B cell (primary cell): ENCODE measurements at regions of chr3 and their contacts with region 1.

Region 1: GRCh38 chr3:196251918-196252317 is 35.6 kb downstream of the SLC51A start:
- DNase-seq: peak; percentile 46
- ATAC-seq: peak; percentile 57
- H3K4me3 ChIP-seq: no peak overlapping the region
- H3K4me3 Mint-ChIP-seq: no peak overlapping the region
- H3K27ac ChIP-seq: no peak overlapping the region
- H3K27ac Mint-ChIP-seq: no peak overlapping the region
- H3K4me1 ChIP-seq: no peaks in the 10 kb centered on the region
- H3K4me1 Mint-ChIP-seq: peaks cover 8% of the 10 kb centered on the region
- H3K27me3 ChIP-seq: no peaks in the 10 kb centered on the region
- H3K27me3 Mint-ChIP-seq: no peaks in the 10 kb centered on the region
- CTCF ChIP-seq: no peak

Region 2: GRCh38 chr3:196287440-196288148 is 35.7 kb after region 1 on chr3 and contains the start of gene PCYT1A:
- CTCF ChIA-PET with region 1: interaction called, 3 read pairs
- POLR2A ChIA-PET with region 1: no interaction called
- intact Hi-C with region 1: loop called (anchors 2 kb)
- DNase-seq: peak; percentile 87
- ATAC-seq: peak; percentile 78
- H3K4me3 ChIP-seq: peak within 1 kb of the TSS; percentile 68 to 98 (median 96)
- H3K4me3 Mint-ChIP-seq: peak within 1 kb of the TSS; percentile 100
- H3K27ac ChIP-seq: peak within 1 kb of the TSS; percentile 70 to 92
- H3K27ac Mint-ChIP-seq: peak within 1 kb of the TSS; percentile 98
- H3K4me1 ChIP-seq: peaks cover 17 to 36% of the 10 kb centered on the region in 2 donors
- H3K4me1 Mint-ChIP-seq: peaks cover 58% of the 10 kb centered on the region
- H3K27me3 ChIP-seq: no peaks in the 10 kb centered on the region
- H3K27me3 Mint-ChIP-seq: no peaks in the 10 kb centered on the region
- CTCF ChIP-seq: no peak
- total RNA-seq, gene PCYT1A: 59.9 and 61.2 TPM in 2 replicates

Region 3: GRCh38 chr3:196317687-196318467 is 66.0 kb after region 1 on chr3 and contains the start of gene DYNLT2B:
- CTCF ChIA-PET with region 1: interaction called, 3 read pairs
- POLR2A ChIA-PET with region 1: interaction called, 3 read pairs
- intact Hi-C with region 1: loop called (anchors 5 kb)
- DNase-seq: peak; percentile 93
- ATAC-seq: peak; percentile 91
- H3K4me3 ChIP-seq: peak within 1 kb of the TSS; percentile 44 to 85 (median 76)
- H3K4me3 Mint-ChIP-seq: peak within 1 kb of the TSS; percentile 96
- H3K27ac ChIP-seq: peak within 1 kb of the TSS; percentile 85 to 89
- H3K27ac Mint-ChIP-seq: peak within 1 kb of the TSS; percentile 97
- H3K4me1 ChIP-seq: peaks cover 0 to 10% of the 10 kb centered on the region in 2 donors
- H3K4me1 Mint-ChIP-seq: peaks cover 10% of the 10 kb centered on the region
- H3K27me3 ChIP-seq: no peaks in the 10 kb centered on the region
- H3K27me3 Mint-ChIP-seq: no peaks in the 10 kb centered on the region
- CTCF ChIP-seq: no peak
- total RNA-seq, gene DYNLT2B: 5.6 and 6.5 TPM in 2 replicates

Region 4: DNA sequence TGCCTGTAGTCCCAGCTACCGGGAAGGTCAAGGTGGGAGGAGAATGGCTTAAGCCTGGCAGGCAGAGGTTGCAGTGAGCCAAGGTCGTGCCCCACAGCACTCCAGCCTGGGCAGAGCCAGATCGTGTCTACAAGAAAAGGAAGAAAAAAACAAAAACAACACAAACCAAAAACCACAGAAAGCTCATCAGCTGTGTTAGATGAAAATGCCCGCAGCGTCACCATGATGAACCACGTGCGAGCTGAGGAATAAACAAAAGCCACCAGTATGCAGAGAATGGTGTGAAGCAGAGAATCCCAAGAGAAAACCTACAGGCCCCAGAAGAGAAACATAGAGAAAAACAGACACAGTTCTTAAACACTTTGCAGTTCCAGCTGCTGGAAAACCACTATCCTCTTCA is 106.0 kb after region 1 on chr3:
- CTCF ChIA-PET with region 1: interaction called, 3 read pairs
- POLR2A ChIA-PET with region 1: no interaction called
- intact Hi-C with region 1: loop called (anchors 10 kb)
- DNase-seq: no peak
- ATAC-seq: no peak
- H3K4me3 ChIP-seq: no peak overlapping the region
- H3K4me3 Mint-ChIP-seq: no peak overlapping the region
- H3K27ac ChIP-seq: no peak overlapping the region
- H3K27ac Mint-ChIP-seq: no peak overlapping the region
- H3K4me1 ChIP-seq: no peaks in the 10 kb centered on the region
- H3K4me1 Mint-ChIP-seq: no peaks in the 10 kb centered on the region
- H3K27me3 ChIP-seq: no peaks in the 10 kb centered on the region
- H3K27me3 Mint-ChIP-seq: no peaks in the 10 kb centered on the region
- CTCF ChIP-seq: no peak

Region 5: DNA sequence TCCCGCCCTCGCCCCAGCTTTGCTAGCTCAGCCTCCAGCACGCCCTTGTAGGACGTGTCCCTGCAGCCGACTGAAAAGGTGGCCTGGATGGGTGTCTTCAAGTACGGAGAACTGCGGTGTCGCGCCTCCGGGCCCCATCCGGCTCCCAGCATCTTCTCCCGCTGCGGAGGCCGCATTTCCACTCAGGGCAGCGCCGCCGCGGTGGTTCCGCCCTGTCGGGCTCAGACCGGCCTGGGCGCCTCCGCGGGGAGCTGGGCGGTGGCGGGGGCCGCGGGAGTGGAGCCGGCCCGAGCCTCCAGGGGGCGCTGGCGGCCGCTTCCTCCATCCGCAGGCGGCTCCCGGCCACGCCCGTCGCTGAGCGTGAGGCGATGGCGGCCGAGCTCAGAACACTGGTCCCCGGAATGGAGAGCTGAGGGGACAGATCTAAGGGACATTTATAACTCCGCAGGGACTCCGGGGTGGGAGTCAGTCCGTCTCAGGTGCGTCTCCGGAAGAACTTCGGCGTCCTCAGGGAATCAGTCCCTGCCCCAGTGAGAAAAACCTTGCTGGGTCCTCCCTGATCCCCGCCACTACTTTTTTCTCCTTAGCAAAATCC is 276.8 kb after region 1 on chr3:
- CTCF ChIA-PET with region 1: interaction called, 10 read pairs
- POLR2A ChIA-PET with region 1: no interaction called
- intact Hi-C with region 1: loop called (anchors 5 kb)
- DNase-seq: peak; percentile 83
- ATAC-seq: peak; percentile 98
- H3K4me3 ChIP-seq: peak overlapping the region; percentile 38 to 60 (median 38)
- H3K4me3 Mint-ChIP-seq: peak overlapping the region; percentile 84
- H3K27ac ChIP-seq: no peak overlapping the region
- H3K27ac Mint-ChIP-seq: peak overlapping the region; percentile 73
- H3K4me1 ChIP-seq: peaks cover 6 to 8% of the 10 kb centered on the region in 2 donors
- H3K4me1 Mint-ChIP-seq: peaks cover 7% of the 10 kb centered on the region
- H3K27me3 ChIP-seq: peaks cover 0 to 2% (median 0%) of the 10 kb centered on the region in 4 experiments
- H3K27me3 Mint-ChIP-seq: peaks cover 3% of the 10 kb centered on the region
- CTCF ChIP-seq: peak; percentile 82